A549 (cell line): ENCODE measurements at regions of chr1 and their contacts with region 1.

Region 1: GRCh38 chr1:60989749-60990713 is 92.3 kb upstream of the NFIA start:
- DNase-seq: no peak
- ATAC-seq: no peak; a peak in 2 of 6 replicates
- H3K4me3 ChIP-seq: no peak overlapping the region
- H3K27ac ChIP-seq: no peak overlapping the region
- H3K4me1 ChIP-seq: no peaks in the 10 kb centered on the region
- CTCF ChIP-seq: no peak
- EP300 ChIP-seq: no peak
- POLR2A ChIP-seq: no peak
- RAD21 ChIP-seq: no peak

Region 2: GRCh38 chr1:60898987-60899386 is 91.0 kb before region 1 on chr1:
- CTCF ChIA-PET with region 1: no interaction called
- POLR2A ChIA-PET with region 1: no interaction called
- DNase-seq: no peak
- ATAC-seq: no peak
- H3K4me3 ChIP-seq: no peak overlapping the region
- H3K27ac ChIP-seq: no peak overlapping the region
- H3K4me1 ChIP-seq: no peaks in the 10 kb centered on the region
- CTCF ChIP-seq: no peak
- EP300 ChIP-seq: no peak
- POLR2A ChIP-seq: no peak
- RAD21 ChIP-seq: no peak

Region 3: GRCh38 chr1:60978421-60979357 is 11.3 kb before region 1 on chr1:
- CTCF ChIA-PET with region 1: interaction called, 11 read pairs
- POLR2A ChIA-PET with region 1: no interaction called
- DNase-seq: peak; percentile 21 to 43
- ATAC-seq: peak; percentile 95 to 96
- H3K4me3 ChIP-seq: no peak overlapping the region
- H3K27ac ChIP-seq: no peak overlapping the region
- H3K4me1 ChIP-seq: peaks cover 7% of the 10 kb centered on the region; the same call in 1 of the 3 replicates
- CTCF ChIP-seq: peak; percentile 56
- EP300 ChIP-seq: no peak
- POLR2A ChIP-seq: no peak
- RAD21 ChIP-seq: peak; percentile 67 to 77